Transverse colon (tissue), 4 donors: ENCODE measurements at regions of chr11 and their contacts with region 1.

Region 1: GRCh38 chr11:117426269-117426685 is 98.6 kb downstream of the CEP164 start:
- DNase-seq: peak; percentile 64
- H3K4me3 ChIP-seq: no peak overlapping the region
- H3K27ac ChIP-seq: no peak overlapping the region
- H3K4me1 ChIP-seq: peaks cover 0 to 4% (median 0%) of the 10 kb centered on the region in 4 donors
- H3K27me3 ChIP-seq: peaks cover 13% of the 10 kb centered on the region
- CTCF ChIP-seq: peak; percentile 89 to 98 (median 96)
- EP300 ChIP-seq: no peak
- POLR2A ChIP-seq: no peak

Region 2: DNA sequence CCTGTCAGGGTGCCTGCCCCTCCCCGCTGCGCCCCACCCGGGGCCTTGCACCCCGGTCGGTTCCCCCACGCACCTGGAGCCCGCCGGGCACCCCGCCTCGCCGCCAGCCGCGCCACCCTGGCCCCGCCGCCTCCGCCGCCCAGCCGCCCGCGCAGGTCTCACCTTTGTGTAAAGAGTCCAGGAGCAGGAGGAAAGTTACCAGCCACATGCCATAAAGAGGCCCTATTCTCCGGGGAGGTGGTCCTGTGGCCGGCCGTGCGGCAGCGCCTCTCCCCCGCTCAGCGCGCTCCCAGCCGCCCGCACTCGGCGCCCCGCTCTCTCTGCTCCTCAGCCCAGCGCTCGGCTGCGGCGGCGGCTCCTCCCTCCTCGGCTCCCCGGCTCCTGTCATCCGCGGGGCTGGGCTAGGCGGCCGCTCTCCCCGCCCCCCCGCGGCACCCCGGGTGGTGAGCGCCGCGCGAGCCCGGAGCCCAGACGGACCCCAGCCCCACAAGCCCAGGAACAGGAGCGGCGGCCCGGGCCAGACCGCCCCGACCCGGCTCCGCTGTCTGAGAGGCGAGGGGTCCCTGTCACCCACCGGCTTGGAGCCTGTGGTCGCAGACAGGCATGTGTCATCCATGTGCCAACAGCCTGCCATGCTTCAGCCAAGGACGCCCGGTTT is 370.7 kb after region 1 on chr11 and contains the start of gene DSCAML1:
- in situ Hi-C with region 1: loop called in 2 of 4 experiments (anchors 25 kb)
- intact Hi-C with region 1: no loop called
- DNase-seq: no peak
- H3K4me3 ChIP-seq: peak within 1 kb of the TSS in 3 of 4 donors; percentile 27 to 50 (median 41)
- H3K27ac ChIP-seq: peak within 1 kb of the TSS in 1 of 4 donors; percentile 14
- H3K4me1 ChIP-seq: peaks cover 9 to 21% (median 16%) of the 10 kb centered on the region in 4 donors
- H3K27me3 ChIP-seq: peaks cover 51% of the 10 kb centered on the region
- CTCF ChIP-seq: no peak
- EP300 ChIP-seq: no peak
- POLR2A ChIP-seq: no peak
- total RNA-seq, gene DSCAML1: 2.9 to 5.8 (median 3.3) TPM

Region 3: GRCh38 chr11:117817368-117818040 is 391.2 kb after region 1 on chr11:
- in situ Hi-C with region 1: loop called in 1 of 4 experiments (anchors 25 kb)
- intact Hi-C with region 1: loop called (anchors 5 kb)
- DNase-seq: peak; percentile 88
- H3K4me3 ChIP-seq: no peak overlapping the region
- H3K27ac ChIP-seq: peak overlapping the region; percentile 75 to 79 (median 76)
- H3K4me1 ChIP-seq: peaks cover 25 to 63% (median 49%) of the 10 kb centered on the region in 4 donors
- H3K27me3 ChIP-seq: no peaks in the 10 kb centered on the region
- CTCF ChIP-seq: peak; percentile 99 to 100 (median 100)
- EP300 ChIP-seq: no peak
- POLR2A ChIP-seq: no peak

Region 4: GRCh38 chr11:117946842-117947526 is 520.7 kb after region 1 on chr11:
- in situ Hi-C with region 1: loop called in 2 of 4 experiments (anchors 25 kb)
- intact Hi-C with region 1: no loop called
- DNase-seq: peak; percentile 89
- H3K4me3 ChIP-seq: no peak overlapping the region
- H3K27ac ChIP-seq: no peak overlapping the region
- H3K4me1 ChIP-seq: peaks cover 0 to 3% (median 0%) of the 10 kb centered on the region in 4 donors
- H3K27me3 ChIP-seq: no peaks in the 10 kb centered on the region
- CTCF ChIP-seq: peak; percentile 95 to 98 (median 97)
- EP300 ChIP-seq: no peak
- POLR2A ChIP-seq: no peak

Region 5: GRCh38 chr11:118046051-118046963 is 620.0 kb after region 1 on chr11:
- in situ Hi-C with region 1: loop called in 2 of 4 experiments (anchors 25 kb)
- intact Hi-C with region 1: no loop called
- DNase-seq: no peak
- H3K4me3 ChIP-seq: no peak overlapping the region
- H3K27ac ChIP-seq: no peak overlapping the region
- H3K4me1 ChIP-seq: no peaks in the 10 kb centered on the region
- H3K27me3 ChIP-seq: no peaks in the 10 kb centered on the region
- CTCF ChIP-seq: no peak
- EP300 ChIP-seq: no peak
- POLR2A ChIP-seq: no peak